Gastrocnemius medialis (tissue), 4 donors: ENCODE measurements at regions of chr11 and their contacts with region 1.

Region 1: GRCh38 chr11:12110201-12110713 is at the start of gene MICAL2:
- DNase-seq: peak; percentile 78 to 82
- ATAC-seq: peak; percentile 90 to 91
- H3K4me3 ChIP-seq: peak within 1 kb of the TSS; percentile 65 to 92 (median 77)
- H3K27ac ChIP-seq: peak within 1 kb of the TSS; percentile 70 to 82 (median 80)
- H3K4me1 ChIP-seq: peaks cover 10 to 19% of the 10 kb centered on the region in 2 donors
- H3K27me3 ChIP-seq: no peaks in the 10 kb centered on the region
- CTCF ChIP-seq: peak in 1 of 5 experiments; percentile 12
- POLR2A ChIP-seq: peak; percentile 85 to 87
- total RNA-seq, gene MICAL2: 24.7 to 53.7 (median 37.0) TPM

Region 2: DNA sequence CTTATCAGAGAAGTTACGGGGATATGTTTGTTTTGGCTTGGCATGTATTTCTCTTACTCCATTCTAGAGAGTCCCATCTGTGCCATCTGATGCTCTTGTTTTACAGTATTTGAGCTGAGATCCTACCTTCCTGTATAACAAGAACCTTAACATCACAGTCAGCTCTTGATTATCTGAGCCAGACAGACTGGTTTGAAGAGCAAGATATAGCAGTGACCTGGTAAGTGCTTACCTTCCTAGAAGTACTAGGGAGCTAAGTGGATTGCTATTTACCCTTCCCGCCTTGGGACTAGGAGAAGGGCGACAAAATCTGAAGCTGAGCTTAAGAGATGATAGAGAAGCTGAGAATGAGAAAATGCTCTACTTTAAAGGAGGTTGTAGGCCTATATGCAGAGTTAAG is 992.5 kb before region 1 on chr11:
- in situ Hi-C with region 1: no loop called
- intact Hi-C with region 1: no loop called
- DNase-seq: no peak
- ATAC-seq: no peak
- H3K4me3 ChIP-seq: no peak overlapping the region
- H3K27ac ChIP-seq: no peak overlapping the region
- H3K4me1 ChIP-seq: no peaks in the 10 kb centered on the region
- H3K27me3 ChIP-seq: no peaks in the 10 kb centered on the region
- CTCF ChIP-seq: no peak
- POLR2A ChIP-seq: no peak

Region 3: DNA sequence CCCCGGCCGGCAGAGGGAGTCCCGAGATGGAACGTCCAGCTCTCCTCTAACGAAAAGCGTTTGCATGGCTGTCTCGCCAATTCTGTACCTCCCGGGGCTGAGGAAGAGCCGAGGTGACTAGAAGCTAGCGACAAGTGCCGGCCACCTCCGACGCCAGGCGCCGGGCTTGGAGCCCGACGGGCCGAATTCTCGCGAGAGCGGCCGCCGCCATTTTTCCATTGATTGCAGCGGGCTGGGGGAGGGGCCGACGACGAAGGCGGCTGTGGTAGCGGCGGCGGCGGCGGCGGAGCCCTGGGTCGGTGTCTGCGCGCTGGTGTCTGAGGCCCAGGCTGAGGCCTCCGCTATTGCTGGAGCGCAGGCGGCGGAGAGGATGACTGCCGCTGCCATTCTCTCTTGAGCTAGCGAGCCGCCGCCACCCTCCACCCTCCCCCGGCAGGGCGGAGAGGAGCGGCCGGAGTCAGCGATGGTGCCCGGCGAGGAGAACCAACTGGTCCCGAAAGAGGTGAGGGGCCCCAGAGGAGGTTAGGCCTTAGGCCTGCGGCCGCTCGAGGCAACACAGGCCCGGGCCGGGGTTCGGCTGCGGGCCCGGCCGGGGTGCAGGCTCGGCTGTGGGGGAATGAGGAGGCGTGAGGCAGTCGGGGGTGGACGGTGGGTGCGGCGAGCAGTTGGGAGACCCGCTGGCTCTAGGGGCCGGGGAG is 268.4 kb before region 1 on chr11 and contains the start of gene USP47:
- in situ Hi-C with region 1: no loop called
- intact Hi-C with region 1: loop called (anchors 2 kb)
- DNase-seq: peak; percentile 78 to 89
- ATAC-seq: peak; percentile 68 to 74
- H3K4me3 ChIP-seq: peak within 1 kb of the TSS; percentile 93 to 99 (median 96)
- H3K27ac ChIP-seq: peak within 1 kb of the TSS; percentile 99 to 100 (median 99)
- H3K4me1 ChIP-seq: peaks cover 34 to 36% of the 10 kb centered on the region in 2 donors
- H3K27me3 ChIP-seq: no peaks in the 10 kb centered on the region
- CTCF ChIP-seq: peak; percentile 54 to 83 (median 73)
- POLR2A ChIP-seq: peak; percentile 88 to 91
- total RNA-seq, gene USP47: 84.4 to 222 (median 97.6) TPM

Region 4: DNA sequence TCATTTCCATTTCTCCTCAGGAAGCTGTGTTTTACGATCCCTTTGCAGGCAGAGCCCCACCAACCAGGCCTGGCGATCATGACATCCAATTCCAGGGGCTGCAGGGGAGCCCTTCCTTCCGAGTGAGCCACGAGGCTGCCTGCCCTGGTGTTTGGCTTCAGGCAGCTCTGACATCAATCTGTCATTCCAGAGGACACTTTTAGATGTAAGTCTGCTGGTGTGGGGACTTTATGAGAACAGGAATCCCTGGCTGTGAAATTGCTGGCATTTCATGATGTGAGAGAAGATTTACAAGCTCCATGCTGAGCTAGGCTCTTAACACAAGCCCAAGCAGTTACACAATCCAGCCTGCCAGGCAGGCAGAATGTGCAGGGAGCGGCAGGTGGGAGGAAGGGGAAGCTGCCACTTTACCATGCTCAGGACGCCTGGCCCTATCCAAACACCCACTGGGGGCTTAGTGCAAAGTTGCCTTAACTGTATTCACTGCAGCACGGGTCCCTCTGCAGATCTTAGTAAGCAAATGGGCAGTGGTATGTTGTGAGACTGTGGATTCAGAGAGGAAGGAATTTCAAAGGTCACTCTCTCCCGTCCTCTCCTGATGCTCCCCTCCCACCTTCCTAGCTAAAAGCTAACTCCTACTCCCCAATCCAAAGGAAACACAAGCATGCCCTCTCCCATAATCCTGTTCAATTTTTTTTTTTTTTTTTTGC is 43.3 kb before region 1 on chr11:
- in situ Hi-C with region 1: no loop called
- intact Hi-C with region 1: loop called (anchors 5 kb)
- DNase-seq: peak; percentile 80 to 90
- ATAC-seq: peak; percentile 74 to 79
- H3K4me3 ChIP-seq: no peak overlapping the region
- H3K27ac ChIP-seq: peak overlapping the region; percentile 84 to 89 (median 86)
- H3K4me1 ChIP-seq: peaks cover 44 to 45% of the 10 kb centered on the region in 2 donors
- H3K27me3 ChIP-seq: no peaks in the 10 kb centered on the region
- CTCF ChIP-seq: no peak
- POLR2A ChIP-seq: peak; percentile 55 to 73

Region 5: GRCh38 chr11:12159351-12160099 is 49.3 kb after region 1 on chr11:
- in situ Hi-C with region 1: no loop called
- intact Hi-C with region 1: loop called (anchors 5 kb)
- DNase-seq: peak; percentile 38 to 49
- ATAC-seq: peak; percentile 90 to 93
- H3K4me3 ChIP-seq: no peak overlapping the region
- H3K27ac ChIP-seq: peak overlapping the region; percentile 62 to 93 (median 74)
- H3K4me1 ChIP-seq: peaks cover 11 to 30% of the 10 kb centered on the region in 2 donors
- H3K27me3 ChIP-seq: no peaks in the 10 kb centered on the region
- CTCF ChIP-seq: no peak
- POLR2A ChIP-seq: peak; percentile 17 to 68